Left colon (tissue), 2 donors: ENCODE measurements at regions of chr14 and their contacts with region 1.

Region 1: DNA sequence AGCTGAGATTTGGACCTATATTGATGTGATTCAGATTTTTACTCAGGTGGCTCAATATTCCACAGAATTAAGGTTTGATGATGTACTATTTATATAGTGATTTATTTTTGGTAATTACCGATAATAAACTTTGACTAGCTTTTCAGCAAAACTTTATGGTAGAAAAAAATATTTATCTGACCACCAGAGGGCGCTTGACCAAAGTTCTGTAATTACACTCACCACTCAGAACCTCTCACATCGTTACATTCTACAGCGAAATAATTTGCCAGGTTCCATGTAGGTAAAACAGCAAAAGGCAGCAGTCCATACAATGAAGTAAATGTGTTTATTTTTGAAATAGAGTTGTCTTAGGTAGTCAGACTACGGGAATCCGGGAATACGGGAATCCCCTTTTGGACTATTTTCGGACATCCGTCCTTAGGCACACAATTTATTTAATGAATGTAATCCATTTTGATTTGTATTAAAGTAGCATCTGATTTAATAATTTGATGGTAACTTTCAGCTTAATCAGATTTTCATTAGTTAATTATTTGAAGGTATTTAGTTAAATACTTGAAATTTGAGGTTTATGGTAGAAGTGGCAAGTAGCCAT is 143.0 kb upstream of the DDHD1 start:
- DNase-seq: no peak
- ATAC-seq: no peak

Region 2: DNA sequence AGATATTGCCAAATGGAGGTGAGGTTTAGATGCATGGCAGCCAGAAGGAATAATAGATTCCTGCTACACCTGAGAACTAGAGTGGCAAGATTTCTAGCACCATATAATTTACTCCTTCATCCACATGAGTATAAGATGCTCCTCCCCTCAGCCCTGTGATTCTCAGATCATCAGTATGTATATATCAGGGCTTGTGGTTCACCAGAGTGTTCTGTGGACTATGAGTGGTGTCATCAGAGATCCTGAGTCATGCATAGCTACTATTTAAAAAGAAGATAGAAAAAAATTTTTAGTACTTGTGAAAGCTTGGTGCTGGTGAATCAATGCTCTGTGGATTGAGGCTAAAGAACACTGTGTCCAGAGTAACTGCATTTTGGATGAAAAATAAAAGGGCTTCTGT is 374.6 kb after region 1 on chr14:
- intact Hi-C with region 1: no loop called
- DNase-seq: no peak
- ATAC-seq: no peak

Region 3: DNA sequence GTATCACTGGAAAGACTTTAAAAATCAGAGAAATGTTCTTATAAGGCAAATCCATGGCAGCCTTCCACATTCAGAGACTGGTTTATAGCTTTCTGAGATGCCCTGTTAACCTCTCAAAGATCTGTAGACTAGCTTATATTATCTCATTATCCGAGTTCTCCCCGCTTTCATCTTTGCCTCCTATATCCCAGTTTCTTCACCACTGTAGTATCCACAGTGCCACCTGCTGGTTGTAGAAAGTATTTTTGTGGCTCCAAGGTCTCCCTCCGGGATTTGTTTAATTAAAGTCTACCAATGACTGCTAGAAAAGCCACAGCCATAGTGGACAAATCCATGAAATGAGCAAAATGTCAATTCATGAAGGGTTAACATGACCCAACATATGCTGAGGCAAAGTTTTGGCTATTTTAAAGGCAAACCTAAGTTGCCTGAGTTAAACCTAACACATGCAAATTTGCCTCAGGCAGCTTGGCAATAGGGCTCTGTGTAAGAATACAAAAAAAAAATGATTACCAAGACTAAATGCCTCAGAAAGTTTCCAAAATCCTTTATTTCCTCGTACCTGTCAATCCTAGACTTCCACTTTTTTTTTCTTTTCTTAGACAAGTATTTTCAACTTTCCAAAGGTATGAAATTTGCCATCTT is 879.3 kb after region 1 on chr14:
- intact Hi-C with region 1: loop called in 1 of 2 experiments (anchors 10 kb)
- DNase-seq: peak; percentile 34 to 64
- ATAC-seq: peak; percentile 71

Region 4: GRCh38 chr14:54347997-54348611 is 1052.0 kb after region 1 on chr14:
- intact Hi-C with region 1: loop called in 1 of 2 experiments (anchors 10 kb)
- DNase-seq: no peak
- ATAC-seq: peak; percentile 88